CD4-positive, alpha-beta memory T cell (primary cell): ENCODE measurements at regions of chr2 and their contacts with region 1.

Region 1: DNA sequence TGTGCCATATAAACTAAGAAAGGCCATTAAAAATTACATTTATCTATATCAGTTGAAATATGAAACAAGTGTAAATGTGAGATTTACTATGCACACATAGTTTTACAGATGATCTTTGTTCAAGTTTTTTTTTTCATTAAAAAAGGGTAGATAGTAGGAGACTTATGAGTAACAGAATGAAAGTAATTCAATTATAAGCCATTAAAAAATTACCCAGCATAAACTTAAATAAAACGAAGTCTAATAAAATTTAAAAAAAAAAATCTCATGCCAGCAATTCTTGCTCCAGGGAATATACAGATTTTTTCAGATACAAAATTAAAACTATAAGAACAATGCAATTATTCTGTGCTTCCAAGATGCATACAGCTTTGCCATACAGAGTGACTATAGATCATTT is 118.3 kb upstream of the RNU4ATAC start:
- DNase-seq: no peak
- H3K4me3 ChIP-seq: no peak overlapping the region
- H3K4me3 Mint-ChIP-seq: no peak overlapping the region
- H3K27ac ChIP-seq: no peak overlapping the region
- H3K27ac Mint-ChIP-seq: no peak overlapping the region
- H3K4me1 ChIP-seq: no peaks in the 10 kb centered on the region
- H3K4me1 Mint-ChIP-seq: peaks cover 0 to 4% (median 0%) of the 10 kb centered on the region in 4 donors
- H3K27me3 ChIP-seq: no peaks in the 10 kb centered on the region
- H3K27me3 Mint-ChIP-seq: no peaks in the 10 kb centered on the region

Region 2: GRCh38 chr2:120978359-120979050 is 433.8 kb before region 1 on chr2:
- CTCF ChIA-PET with region 1: no interaction called
- POLR2A ChIA-PET with region 1: no interaction called
- intact Hi-C with region 1: no loop called
- DNase-seq: no peak
- H3K4me3 ChIP-seq: no peak overlapping the region
- H3K4me3 Mint-ChIP-seq: no peak overlapping the region
- H3K27ac ChIP-seq: no peak overlapping the region
- H3K27ac Mint-ChIP-seq: no peak overlapping the region
- H3K4me1 ChIP-seq: no peaks in the 10 kb centered on the region
- H3K4me1 Mint-ChIP-seq: no peaks in the 10 kb centered on the region
- H3K27me3 ChIP-seq: no peaks in the 10 kb centered on the region
- H3K27me3 Mint-ChIP-seq: peaks cover 0 to 2% of the 10 kb centered on the region in 2 donors

Region 3: DNA sequence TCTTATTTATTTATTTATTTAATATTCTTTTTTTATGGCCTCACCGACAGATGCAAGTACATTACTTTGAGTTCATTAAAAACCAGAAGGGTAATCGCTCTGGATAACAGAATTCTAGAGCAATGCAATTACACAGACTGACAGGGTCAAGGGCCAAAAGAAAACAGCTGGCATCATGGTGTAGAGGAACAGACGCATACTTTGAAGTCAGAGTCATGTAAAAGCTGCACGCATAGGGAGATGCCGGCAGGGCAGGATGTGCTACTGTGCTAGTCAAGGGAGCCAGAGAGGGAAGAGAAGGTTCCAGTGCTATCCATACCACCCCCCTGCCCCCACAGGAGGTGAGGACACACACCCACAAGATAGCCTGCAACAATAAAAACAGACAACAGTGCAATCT is 12.1 kb before region 1 on chr2:
- CTCF ChIA-PET with region 1: interaction called, 16 read pairs
- POLR2A ChIA-PET with region 1: no interaction called
- intact Hi-C with region 1: no loop called
- DNase-seq: no peak
- H3K4me3 ChIP-seq: no peak overlapping the region
- H3K4me3 Mint-ChIP-seq: no peak overlapping the region
- H3K27ac ChIP-seq: no peak overlapping the region
- H3K27ac Mint-ChIP-seq: peak overlapping the region in 1 of 7 donors; percentile 57
- H3K4me1 ChIP-seq: no peaks in the 10 kb centered on the region
- H3K4me1 Mint-ChIP-seq: peaks cover 0 to 4% (median 0%) of the 10 kb centered on the region in 4 donors
- H3K27me3 ChIP-seq: no peaks in the 10 kb centered on the region
- H3K27me3 Mint-ChIP-seq: no peaks in the 10 kb centered on the region

Region 4: DNA sequence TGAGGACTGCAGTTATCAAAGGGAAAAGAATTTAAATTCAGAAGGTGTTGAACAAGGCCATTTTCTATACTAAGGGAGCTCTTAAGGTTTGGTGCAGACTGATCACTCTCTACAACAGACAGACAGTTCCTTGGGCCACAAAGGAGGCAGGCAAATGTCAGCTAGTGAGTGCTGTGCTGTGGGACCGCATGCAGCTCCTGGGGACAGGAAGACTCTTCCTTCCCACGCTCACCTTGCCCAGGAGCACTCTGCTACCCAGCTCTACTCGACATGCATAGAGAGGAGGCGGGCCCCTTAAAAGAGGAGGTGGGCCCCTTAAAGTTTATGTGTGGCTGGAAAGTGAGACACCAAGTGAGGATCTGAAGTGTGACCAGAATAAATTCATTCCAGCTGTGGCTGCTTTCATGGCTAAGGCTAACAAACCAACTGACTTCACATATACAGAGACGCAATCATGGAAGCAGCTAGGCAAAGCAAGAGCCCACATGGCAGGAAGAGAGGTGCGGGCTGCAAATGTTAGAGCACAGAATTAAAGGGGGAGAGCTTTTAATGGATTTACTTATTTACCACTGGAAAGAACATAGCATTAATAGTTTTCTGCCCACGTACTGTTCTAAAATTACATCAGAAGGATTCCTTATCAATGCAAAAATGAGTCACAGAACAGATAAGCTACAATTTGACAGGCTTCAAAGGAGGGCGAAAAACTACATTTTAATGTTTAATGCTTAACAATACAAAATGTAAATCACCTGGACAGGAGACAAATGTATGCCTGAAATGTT is 17.0 kb after region 1 on chr2:
- CTCF ChIA-PET with region 1: no interaction called
- POLR2A ChIA-PET with region 1: no interaction called
- intact Hi-C with region 1: no loop called
- DNase-seq: no peak
- H3K4me3 ChIP-seq: no peak overlapping the region
- H3K4me3 Mint-ChIP-seq: no peak overlapping the region
- H3K27ac ChIP-seq: no peak overlapping the region
- H3K27ac Mint-ChIP-seq: peak overlapping the region in 2 of 7 donors; percentile 47 to 84
- H3K4me1 ChIP-seq: no peaks in the 10 kb centered on the region
- H3K4me1 Mint-ChIP-seq: peaks cover 0 to 2% (median 0%) of the 10 kb centered on the region in 4 donors
- H3K27me3 ChIP-seq: no peaks in the 10 kb centered on the region
- H3K27me3 Mint-ChIP-seq: no peaks in the 10 kb centered on the region